ENCODE measurements at regions of chr19 and their contacts with region 1.

Region 1: GRCh38 chr19:1507763-1508509 is 4.9 kb downstream of the ADAMTSL5 start:
- DNase-seq: peak; percentile 95
- H3K4me3 Mint-ChIP-seq: peak overlapping the region; percentile 87
- H3K27ac Mint-ChIP-seq: peak overlapping the region; percentile 88
- H3K4me1 Mint-ChIP-seq: peaks cover 7% of the 10 kb centered on the region
- H3K27me3 Mint-ChIP-seq: peaks cover 22% of the 10 kb centered on the region

Region 2: GRCh38 chr19:1490311-1491113 is 17.4 kb before region 1 on chr19 and contains the start of gene PCSK4:
- intact Hi-C with region 1: loop called (anchors 2 kb)
- DNase-seq: peak; percentile 99
- H3K4me3 Mint-ChIP-seq: peak within 1 kb of the TSS; percentile 90
- H3K27ac Mint-ChIP-seq: peak within 1 kb of the TSS; percentile 85
- H3K4me1 Mint-ChIP-seq: peaks cover 6% of the 10 kb centered on the region
- H3K27me3 Mint-ChIP-seq: peaks cover 8% of the 10 kb centered on the region
- total RNA-seq, gene PCSK4: 1.0 and 1.6 TPM in 2 replicates

Measured in activated CD4-positive, alpha-beta T cell treated with anti-CD3 and anti-CD28 coated beads, Interleukin-2, amount 10 ng/mL, durations not matched to agents 24 days and 14 days (primary cell).